HEK293 (cell line): ENCODE measurements at regions of chr1 and their contacts with region 1.

Region 1: DNA sequence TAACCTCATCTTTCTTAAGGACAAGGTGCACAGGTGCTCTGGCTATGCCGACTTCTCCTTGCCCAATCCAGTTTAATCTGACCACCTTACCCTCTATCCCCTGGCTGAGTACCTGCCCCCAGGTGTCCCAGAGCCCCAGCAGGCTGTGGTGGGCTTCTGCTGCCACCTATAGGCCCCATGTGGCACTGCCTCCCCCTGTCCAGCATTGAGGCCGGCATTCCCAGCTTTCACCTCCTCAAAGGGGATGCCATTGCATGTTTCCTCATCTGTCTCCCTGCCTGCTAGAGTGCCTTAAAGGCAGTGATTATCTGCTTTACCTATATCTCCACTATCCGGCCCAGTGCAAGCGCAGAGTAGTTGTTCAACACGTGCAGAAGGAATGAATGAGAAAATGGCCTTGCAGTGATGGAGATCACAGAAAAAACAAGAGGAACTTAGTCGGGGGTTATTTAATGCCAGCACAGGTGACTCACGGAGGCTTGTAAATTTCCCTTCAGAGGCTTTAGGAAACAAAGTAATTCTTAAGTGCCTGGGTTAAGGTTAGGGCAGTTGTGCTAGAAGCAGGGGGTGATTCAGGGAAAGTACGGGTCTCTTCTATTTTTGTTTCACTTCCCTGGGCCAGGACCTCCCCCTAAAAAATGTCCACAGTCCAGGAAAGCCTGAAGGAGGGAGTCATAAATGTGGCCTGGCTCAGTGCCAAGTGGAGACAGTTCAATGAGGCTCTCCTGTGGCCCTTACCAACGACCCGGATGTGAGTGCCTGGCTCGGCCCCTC is 131.8 kb upstream of the NGF start:
- H3K4me3 ChIP-seq: no peak overlapping the region
- H3K27ac ChIP-seq: no peak overlapping the region
- H3K4me1 ChIP-seq: no peaks in the 10 kb centered on the region
- CTCF ChIP-seq: peak; percentile 86

Region 2: GRCh38 chr1:115112496-115113375 is 357.2 kb before region 1 on chr1:
- CTCF ChIA-PET with region 1: interaction called, 11 read pairs
- POLR2A ChIA-PET with region 1: no interaction called
- H3K4me3 ChIP-seq: no peak overlapping the region
- H3K27ac ChIP-seq: no peak overlapping the region
- H3K4me1 ChIP-seq: no peaks in the 10 kb centered on the region; the same call in 1 of the 2 replicates
- CTCF ChIP-seq: peak; percentile 61

Region 3: GRCh38 chr1:115138968-115139367 is 330.9 kb before region 1 on chr1:
- CTCF ChIA-PET with region 1: interaction called, 179 read pairs
- POLR2A ChIA-PET with region 1: no interaction called
- H3K4me3 ChIP-seq: no peak overlapping the region
- H3K27ac ChIP-seq: no peak overlapping the region
- H3K4me1 ChIP-seq: no peaks in the 10 kb centered on the region
- CTCF ChIP-seq: peak; percentile 91

Region 4: DNA sequence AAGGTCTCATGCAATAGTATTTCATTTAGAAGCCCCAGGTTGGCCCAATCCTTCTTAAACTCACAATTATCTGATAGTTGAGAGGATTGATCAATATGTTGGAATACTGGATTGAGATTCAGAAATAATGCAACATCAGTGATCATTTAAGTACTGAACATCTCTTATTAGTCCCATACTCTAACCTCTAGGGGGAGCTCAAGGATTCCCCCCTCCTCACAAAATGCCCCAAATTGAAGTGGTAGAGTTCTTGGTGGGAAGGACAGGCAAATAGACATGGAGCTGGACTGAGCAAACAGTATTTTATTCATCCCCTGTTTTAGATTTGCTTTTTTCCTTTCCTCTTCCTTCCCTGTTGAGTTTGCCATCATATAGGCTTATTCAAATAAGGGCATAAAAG is 194.7 kb before region 1 on chr1:
- CTCF ChIA-PET with region 1: interaction called, 27 read pairs
- POLR2A ChIA-PET with region 1: no interaction called
- H3K4me3 ChIP-seq: no peak overlapping the region
- H3K27ac ChIP-seq: no peak overlapping the region
- H3K4me1 ChIP-seq: no peaks in the 10 kb centered on the region
- CTCF ChIP-seq: no peak

Region 5: GRCh38 chr1:115456441-115456961 is 13.4 kb before region 1 on chr1:
- CTCF ChIA-PET with region 1: interaction called, 22 read pairs
- POLR2A ChIA-PET with region 1: no interaction called
- H3K4me3 ChIP-seq: no peak overlapping the region
- H3K27ac ChIP-seq: peak overlapping the region; percentile 53
- H3K4me1 ChIP-seq: peaks cover 19% of the 10 kb centered on the region
- CTCF ChIP-seq: no peak

Region 6: GRCh38 chr1:115575661-115576060 is 105.8 kb after region 1 on chr1:
- CTCF ChIA-PET with region 1: no interaction called
- POLR2A ChIA-PET with region 1: no interaction called
- H3K4me3 ChIP-seq: no peak overlapping the region
- H3K27ac ChIP-seq: no peak overlapping the region
- H3K4me1 ChIP-seq: no peaks in the 10 kb centered on the region
- CTCF ChIP-seq: no peak